ENCODE measurements at regions of chrX and their contacts with region 1.

Region 1: DNA sequence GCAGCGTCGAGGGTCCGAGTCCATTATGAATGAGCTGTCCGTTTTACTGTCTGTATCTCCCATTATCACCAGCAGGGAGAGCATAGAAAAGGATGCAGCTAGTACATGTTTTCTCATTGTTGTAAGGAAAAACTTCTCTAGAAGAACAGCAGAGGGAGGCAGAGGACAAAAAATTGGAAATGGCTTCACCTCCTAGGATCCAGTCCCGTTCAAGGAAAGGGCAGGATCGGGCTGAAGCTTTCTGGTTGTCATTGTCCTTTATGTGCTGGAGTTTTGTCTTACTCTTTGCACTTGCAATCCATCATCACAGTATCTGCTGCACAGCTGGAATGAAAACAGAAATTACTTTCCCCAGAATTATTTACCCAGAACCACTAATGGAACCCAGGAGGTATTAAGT is 14.7 kb downstream of the NDP start:
- DNase-seq: no peak
- ATAC-seq: peak; percentile 62 to 83 (median 66)
- H3K4me3 ChIP-seq: no peak overlapping the region
- H3K27ac ChIP-seq: no peak overlapping the region
- H3K4me1 ChIP-seq: no peaks in the 10 kb centered on the region
- H3K27me3 ChIP-seq: peaks cover 0 to 11% (median 0%) of the 10 kb centered on the region in 3 donors
- CTCF ChIP-seq: peak; percentile 72

Region 2: GRCh38 chrX:44025555-44025954 is 67.0 kb after region 1 on chrX:
- intact Hi-C with region 1: loop called in 1 of 2 experiments (anchors 5 kb)
- DNase-seq: no peak
- ATAC-seq: no peak
- H3K4me3 ChIP-seq: no peak overlapping the region
- H3K27ac ChIP-seq: no peak overlapping the region
- H3K4me1 ChIP-seq: no peaks in the 10 kb centered on the region
- H3K27me3 ChIP-seq: peaks cover 0 to 13% (median 0%) of the 10 kb centered on the region in 3 donors
- CTCF ChIP-seq: no peak

Region 3: GRCh38 chrX:44244008-44244407 is 285.5 kb after region 1 on chrX:
- intact Hi-C with region 1: loop called in 1 of 2 experiments (anchors 5 kb)
- DNase-seq: no peak
- ATAC-seq: no peak
- H3K4me3 ChIP-seq: no peak overlapping the region
- H3K27ac ChIP-seq: no peak overlapping the region
- H3K4me1 ChIP-seq: no peaks in the 10 kb centered on the region
- H3K27me3 ChIP-seq: peaks cover 0 to 13% (median 0%) of the 10 kb centered on the region in 3 donors
- CTCF ChIP-seq: peak; percentile 34

Region 4: GRCh38 chrX:45186643-45187026 is 1228.1 kb after region 1 on chrX:
- intact Hi-C with region 1: loop called (anchors 5 to 10 kb)
- DNase-seq: no peak
- ATAC-seq: peak in 2 of 4 donors; percentile 5 to 24
- H3K4me3 ChIP-seq: no peak overlapping the region
- H3K27ac ChIP-seq: no peak overlapping the region
- H3K4me1 ChIP-seq: no peaks in the 10 kb centered on the region
- H3K27me3 ChIP-seq: no peaks in the 10 kb centered on the region
- CTCF ChIP-seq: no peak